PC-3 (cell line): ENCODE measurements at regions of chr10 and their contacts with region 1.

Region 1: GRCh38 chr10:43814663-43815062 is 166.0 kb upstream of the ZNF32 start:
- DNase-seq: peak; percentile 16
- ATAC-seq: peak; percentile 77
- H3K4me3 ChIP-seq: no peak overlapping the region
- H3K27ac ChIP-seq: no peak overlapping the region
- H3K4me1 ChIP-seq: no peaks in the 10 kb centered on the region
- H3K27me3 ChIP-seq: no peaks in the 10 kb centered on the region
- CTCF ChIP-seq: no peak

Region 2: GRCh38 chr10:43863859-43864591 is 49.4 kb after region 1 on chr10:
- CTCF ChIA-PET with region 1: no interaction called
- POLR2A ChIA-PET with region 1: no interaction called
- intact Hi-C with region 1: loop called (anchors 1 kb)
- DNase-seq: peak; percentile 77
- ATAC-seq: peak; percentile 75
- H3K4me3 ChIP-seq: no peak overlapping the region
- H3K27ac ChIP-seq: peak overlapping the region; percentile 60
- H3K4me1 ChIP-seq: peaks cover 27% of the 10 kb centered on the region
- H3K27me3 ChIP-seq: 0 out of 2 replicates have a peak, but pooled peaks cover 4% of the 10 kb centered on the region
- CTCF ChIP-seq: no peak

Region 3: DNA sequence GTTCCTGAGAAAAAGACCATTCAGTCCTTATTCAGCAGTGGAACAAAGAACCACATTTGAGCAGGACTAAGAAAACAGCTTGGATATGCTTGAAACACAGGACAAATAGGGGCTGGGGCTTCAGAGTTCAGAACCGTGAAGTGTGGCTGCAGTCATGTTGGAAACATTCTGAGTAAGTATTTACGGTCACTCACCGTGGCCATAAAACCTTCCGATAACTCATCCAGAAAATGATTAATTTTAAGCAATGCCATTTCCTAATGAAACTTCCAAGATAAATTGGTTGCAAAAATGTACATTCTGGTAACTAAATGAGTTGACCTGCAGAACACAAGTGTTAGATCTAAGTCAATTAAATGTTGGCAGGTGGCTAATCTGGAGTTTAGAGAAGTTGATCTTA is 291.0 kb after region 1 on chr10:
- CTCF ChIA-PET with region 1: no interaction called
- POLR2A ChIA-PET with region 1: no interaction called
- intact Hi-C with region 1: no loop called
- DNase-seq: no peak
- ATAC-seq: no peak
- H3K4me3 ChIP-seq: no peak overlapping the region
- H3K27ac ChIP-seq: no peak overlapping the region
- H3K4me1 ChIP-seq: no peaks in the 10 kb centered on the region
- H3K27me3 ChIP-seq: no peaks in the 10 kb centered on the region
- CTCF ChIP-seq: no peak